ENCODE measurements at regions of chr2 and their contacts with region 1.

Region 1: GRCh38 chr2:99085421-99085820 is 56.1 kb upstream of the C2orf15 start:
- H3K4me3 Mint-ChIP-seq: no peak overlapping the region
- H3K27ac Mint-ChIP-seq: no peak overlapping the region
- H3K4me1 Mint-ChIP-seq: no peaks in the 10 kb centered on the region
- H3K27me3 Mint-ChIP-seq: no peaks in the 10 kb centered on the region

Region 2: GRCh38 chr2:98985905-98986666 is 99.3 kb before region 1 on chr2:
- intact Hi-C with region 1: no loop called
- H3K4me3 Mint-ChIP-seq: no peak overlapping the region
- H3K27ac Mint-ChIP-seq: no peak overlapping the region
- H3K4me1 Mint-ChIP-seq: no peaks in the 10 kb centered on the region
- H3K27me3 Mint-ChIP-seq: peaks cover under 1% of the 10 kb centered on the region

Region 3: DNA sequence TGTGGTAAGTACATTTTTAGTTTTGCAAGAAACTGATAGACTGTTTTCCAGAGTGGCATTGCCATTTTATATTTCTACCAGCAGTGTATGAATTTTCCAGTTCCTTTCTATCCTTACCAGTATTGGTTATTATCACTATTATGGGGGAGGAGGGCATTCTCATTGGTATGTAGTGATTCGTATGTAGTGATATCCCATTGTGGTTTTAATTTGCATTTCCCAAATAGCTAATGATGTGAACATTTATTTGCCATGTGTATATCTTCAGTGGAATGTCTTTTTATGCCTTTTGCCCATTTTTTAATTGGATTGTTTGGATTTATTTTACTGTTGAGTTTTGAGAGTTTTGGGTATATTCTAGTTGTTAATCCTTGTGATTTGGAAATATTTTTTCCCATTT is 268.6 kb after region 1 on chr2:
- intact Hi-C with region 1: loop called (anchors 10 kb)
- H3K4me3 Mint-ChIP-seq: no peak overlapping the region
- H3K27ac Mint-ChIP-seq: no peak overlapping the region
- H3K4me1 Mint-ChIP-seq: peaks cover 22% of the 10 kb centered on the region
- H3K27me3 Mint-ChIP-seq: no peaks in the 10 kb centered on the region

Region 4: GRCh38 chr2:99725820-99726219 is 640.4 kb after region 1 on chr2:
- intact Hi-C with region 1: no loop called
- H3K4me3 Mint-ChIP-seq: no peak overlapping the region
- H3K27ac Mint-ChIP-seq: no peak overlapping the region
- H3K4me1 Mint-ChIP-seq: no peaks in the 10 kb centered on the region
- H3K27me3 Mint-ChIP-seq: no peaks in the 10 kb centered on the region